ENCODE measurements at regions of chr1 and their contacts with region 1.

Region 1: GRCh38 chr1:10430216-10431069 is at the start of gene CENPS:
- DNase-seq: peak; percentile 97 to 100 (median 100)
- ATAC-seq: peak; percentile 96
- H3K4me3 ChIP-seq: peak within 1 kb of the TSS; percentile 60
- H3K27ac ChIP-seq: peak within 1 kb of the TSS; percentile 81
- H3K4me1 ChIP-seq: peaks cover 9 to 21% of the 10 kb centered on the region in 2 experiments; a peak in 4 of 5 replicates
- H3K27me3 ChIP-seq: no peaks in the 10 kb centered on the region
- CTCF ChIP-seq: peak; percentile 96 to 97 (median 97)
- EP300 ChIP-seq: peak; percentile 41; the same call in 1 of the 2 replicates
- POLR2A ChIP-seq: peak; percentile 81
- RAD21 ChIP-seq: peak; percentile 92 to 93
- polyA plus RNA-seq, gene CENPS: 10.2 to 16.4 TPM

Region 2: DNA sequence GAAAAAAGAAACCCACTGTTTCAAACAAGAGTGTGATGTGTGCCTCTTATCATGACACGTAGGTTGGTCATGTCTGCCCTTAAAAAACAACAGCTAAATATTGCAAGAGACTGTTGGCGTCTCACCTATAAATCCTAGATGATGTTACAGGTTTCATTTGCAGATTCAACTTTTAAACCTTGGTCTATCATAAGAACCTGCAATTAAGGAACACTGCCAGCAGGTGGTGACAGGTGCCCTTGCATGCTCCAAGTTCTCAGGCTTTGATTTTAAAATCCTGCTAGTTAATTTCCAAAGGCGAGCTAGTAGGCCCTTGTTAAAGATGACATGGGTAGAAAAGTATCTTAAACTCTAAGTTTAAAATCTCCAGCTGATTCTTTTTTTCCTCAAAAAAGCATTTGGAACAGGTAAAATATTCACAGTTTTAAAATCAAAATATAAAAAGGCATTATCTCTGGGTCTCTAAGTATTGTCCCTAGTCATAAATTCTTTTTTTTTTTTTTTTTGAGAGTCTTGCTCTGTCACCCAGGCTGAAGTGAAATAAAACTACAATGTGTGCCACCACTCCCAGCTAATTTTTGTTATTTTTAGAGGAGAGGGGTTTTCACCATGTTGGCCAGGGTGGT is 645.8 kb before region 1 on chr1:
- CTCF ChIA-PET with region 1: interaction called, 5 read pairs
- POLR2A ChIA-PET with region 1: no interaction called
- in situ Hi-C with region 1: no loop called
- intact Hi-C with region 1: loop called (anchors 1 kb)
- DNase-seq: peak; percentile 64 to 79 (median 65)
- ATAC-seq: peak; percentile 78
- H3K4me3 ChIP-seq: no peak overlapping the region
- H3K27ac ChIP-seq: no peak overlapping the region
- H3K4me1 ChIP-seq: no peaks in the 10 kb centered on the region
- H3K27me3 ChIP-seq: no peaks in the 10 kb centered on the region
- CTCF ChIP-seq: peak; percentile 82 to 97 (median 88)
- EP300 ChIP-seq: no peak
- POLR2A ChIP-seq: no peak
- RAD21 ChIP-seq: peak; percentile 96

Region 3: GRCh38 chr1:9942939-9943788 is 487.3 kb before region 1 on chr1 and contains the starts of genes LZIC and NMNAT1:
- CTCF ChIA-PET with region 1: no interaction called
- POLR2A ChIA-PET with region 1: interaction called, 5 read pairs
- in situ Hi-C with region 1: no loop called
- intact Hi-C with region 1: loop called (anchors 2 kb)
- DNase-seq: peak; percentile 98
- ATAC-seq: peak; percentile 99
- H3K4me3 ChIP-seq: peak within 1 kb of the TSS; percentile 80
- H3K27ac ChIP-seq: peak within 1 kb of the TSS; percentile 88
- H3K4me1 ChIP-seq: peaks cover 4 to 5% of the 10 kb centered on the region in 2 experiments; a peak in 3 of 5 replicates
- H3K27me3 ChIP-seq: no peaks in the 10 kb centered on the region
- CTCF ChIP-seq: no peak; a peak in 1 of 6 replicates
- EP300 ChIP-seq: peak; percentile 48
- POLR2A ChIP-seq: peak; percentile 98
- RAD21 ChIP-seq: no peak; a peak in 1 of 4 replicates
- polyA plus RNA-seq, gene LZIC: 101 to 109 TPM
- polyA plus RNA-seq, gene NMNAT1: 12.1 to 13.3 TPM

Region 4: GRCh38 chr1:10209905-10210810 is 220.3 kb before region 1 on chr1 and contains the start of gene KIF1B:
- CTCF ChIA-PET with region 1: interaction called, 4 read pairs
- POLR2A ChIA-PET with region 1: interaction called, 5 read pairs
- in situ Hi-C with region 1: no loop called
- intact Hi-C with region 1: loop called (anchors 5 kb)
- DNase-seq: peak; percentile 99 to 100 (median 100)
- ATAC-seq: peak; percentile 99
- H3K4me3 ChIP-seq: peak within 1 kb of the TSS; percentile 70
- H3K27ac ChIP-seq: peak within 1 kb of the TSS; percentile 73
- H3K4me1 ChIP-seq: peaks cover 17 to 23% of the 10 kb centered on the region in 2 experiments
- H3K27me3 ChIP-seq: peaks cover 0 to 17% of the 10 kb centered on the region in 2 experiments; a peak in 2 of 5 replicates
- CTCF ChIP-seq: peak; percentile 94 to 97 (median 96)
- EP300 ChIP-seq: no peak; the same call in none of the 2 replicates
- POLR2A ChIP-seq: peak; percentile 47
- RAD21 ChIP-seq: peak; percentile 79 to 85
- polyA plus RNA-seq, gene KIF1B: 2.8 to 3.1 TPM

Region 5: GRCh38 chr1:10378081-10378841 is 52.2 kb before region 1 on chr1:
- CTCF ChIA-PET with region 1: interaction called, 88 read pairs
- POLR2A ChIA-PET with region 1: interaction called, 5 read pairs
- in situ Hi-C with region 1: no loop called
- intact Hi-C with region 1: loop called (anchors 1 kb)
- DNase-seq: peak; percentile 48 to 69 (median 56)
- ATAC-seq: peak; percentile 79
- H3K4me3 ChIP-seq: no peak overlapping the region
- H3K27ac ChIP-seq: peak overlapping the region; percentile 15; the same call in 1 of the 3 replicates
- H3K4me1 ChIP-seq: peaks cover 7 to 8% of the 10 kb centered on the region in 2 experiments; a peak in 4 of 5 replicates
- H3K27me3 ChIP-seq: no peaks in the 10 kb centered on the region
- CTCF ChIP-seq: no peak
- EP300 ChIP-seq: no peak
- POLR2A ChIP-seq: no peak
- RAD21 ChIP-seq: no peak

Region 6: GRCh38 chr1:10494754-10495474 is 64.5 kb after region 1 on chr1:
- CTCF ChIA-PET with region 1: interaction called, 95 read pairs
- POLR2A ChIA-PET with region 1: interaction called, 10 read pairs
- in situ Hi-C with region 1: loop called (anchors 5 kb)
- intact Hi-C with region 1: loop called (anchors 1 kb)
- DNase-seq: peak; percentile 83 to 87 (median 84)
- ATAC-seq: peak; percentile 96
- H3K4me3 ChIP-seq: no peak overlapping the region
- H3K27ac ChIP-seq: no peak overlapping the region; the same call in 2 of the 3 replicates
- H3K4me1 ChIP-seq: peaks cover 0 to 3% of the 10 kb centered on the region in 2 experiments; a peak in 2 of 5 replicates
- H3K27me3 ChIP-seq: no peaks in the 10 kb centered on the region
- CTCF ChIP-seq: peak; percentile 94 to 97 (median 95)
- EP300 ChIP-seq: no peak
- POLR2A ChIP-seq: no peak
- RAD21 ChIP-seq: peak; percentile 85 to 93